Psoas muscle (tissue), 8 donors: ENCODE measurements at regions of chr12 and their contacts with region 1.

Region 1: GRCh38 chr12:106223485-106224354 is 24.1 kb downstream of the CKAP4 start:
- DNase-seq: peak; percentile 67 to 85
- ATAC-seq: peak; percentile 84 to 86 (median 84)
- H3K4me3 ChIP-seq: no peak overlapping the region
- H3K27ac ChIP-seq: no peak overlapping the region
- H3K4me1 ChIP-seq: peaks cover 8% of the 10 kb centered on the region
- H3K27me3 ChIP-seq: no peaks in the 10 kb centered on the region
- CTCF ChIP-seq: peak; percentile 96

Region 2: DNA sequence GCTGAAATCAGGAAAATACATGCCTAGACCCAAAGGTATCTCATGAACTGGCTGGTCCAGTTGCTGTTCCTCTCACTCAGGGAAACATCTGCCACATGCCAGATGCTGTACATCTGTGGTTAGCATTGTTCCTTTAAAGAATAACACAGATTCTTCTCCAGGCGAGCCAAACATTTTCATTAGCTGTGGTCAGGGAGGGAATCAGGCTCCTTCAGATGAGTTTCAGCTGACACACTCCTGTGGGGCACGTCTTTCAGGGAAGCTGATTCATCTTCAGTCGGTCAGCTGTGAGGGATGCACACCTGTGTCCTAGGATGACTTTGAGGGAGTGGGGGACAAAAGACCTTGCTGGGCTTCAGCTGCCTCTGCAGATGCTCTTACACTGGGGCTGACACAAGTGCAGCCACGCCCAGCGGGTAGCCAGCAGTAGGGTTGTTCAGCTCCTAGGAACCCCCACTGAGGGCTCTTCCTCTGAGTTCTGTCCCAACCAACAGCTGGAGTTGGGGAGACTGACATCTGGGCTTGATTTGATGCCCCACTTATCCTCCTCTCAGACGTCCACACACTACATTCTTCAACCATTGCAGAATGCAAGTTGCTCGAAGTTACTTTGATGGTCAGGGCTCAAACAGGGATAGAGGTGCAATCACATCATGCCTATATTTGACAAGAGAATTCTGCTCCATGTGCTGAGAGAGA is 239.9 kb before region 1 on chr12:
- intact Hi-C with region 1: no loop called
- DNase-seq: no peak
- ATAC-seq: peak in 3 of 4 donors; percentile 34 to 54 (median 42)
- H3K4me3 ChIP-seq: no peak overlapping the region
- H3K27ac ChIP-seq: no peak overlapping the region
- H3K4me1 ChIP-seq: peaks cover 13% of the 10 kb centered on the region
- H3K27me3 ChIP-seq: no peaks in the 10 kb centered on the region
- CTCF ChIP-seq: no peak

Region 3: GRCh38 chr12:106179086-106179485 is 44.6 kb before region 1 on chr12:
- intact Hi-C with region 1: no loop called
- DNase-seq: no peak
- ATAC-seq: peak; percentile 70 to 84 (median 72)
- H3K4me3 ChIP-seq: no peak overlapping the region
- H3K27ac ChIP-seq: peak overlapping the region; percentile 67
- H3K4me1 ChIP-seq: peaks cover 11% of the 10 kb centered on the region
- H3K27me3 ChIP-seq: no peaks in the 10 kb centered on the region
- CTCF ChIP-seq: no peak

Region 4: DNA sequence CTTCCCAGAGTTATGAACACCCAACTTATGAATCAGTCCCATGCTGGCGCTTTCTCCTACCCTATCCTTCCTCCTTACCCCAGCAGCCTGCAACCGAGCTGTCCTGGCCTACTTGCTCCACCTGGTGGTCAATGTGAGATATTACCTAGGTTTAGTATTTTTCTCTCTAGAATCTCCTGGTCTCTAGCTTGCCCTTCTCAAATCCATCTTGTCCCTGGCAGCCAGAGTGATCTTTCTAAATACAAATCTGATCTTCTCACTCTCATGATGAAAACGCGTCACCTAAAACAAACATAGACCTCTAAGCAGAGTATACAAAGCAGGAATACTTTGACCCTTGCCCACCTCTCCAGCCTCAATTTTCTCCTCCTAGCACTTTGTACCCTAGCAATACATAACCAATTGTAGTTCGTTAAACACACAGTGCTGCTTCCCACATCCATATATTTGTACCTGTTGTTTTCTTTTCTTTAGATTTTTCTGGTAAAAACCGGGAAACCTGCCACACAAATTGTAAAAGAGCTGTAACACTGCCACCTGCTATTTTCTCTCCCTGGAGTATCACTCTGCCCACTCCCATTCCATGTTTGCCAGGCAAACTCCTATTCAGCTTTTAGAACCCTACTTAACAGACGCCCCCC is 58.9 kb after region 1 on chr12:
- intact Hi-C with region 1: loop called (anchors 1 to 2 kb)
- DNase-seq: peak; percentile 28 to 59
- ATAC-seq: peak; percentile 80 to 86 (median 84)
- H3K4me3 ChIP-seq: no peak overlapping the region
- H3K27ac ChIP-seq: no peak overlapping the region
- H3K4me1 ChIP-seq: peaks cover 4% of the 10 kb centered on the region
- H3K27me3 ChIP-seq: no peaks in the 10 kb centered on the region
- CTCF ChIP-seq: peak; percentile 76